Activated CD4-positive, alpha-beta T cell treated with anti-CD3 and anti-CD28 coated beads for 36 hours (primary cell): ENCODE measurements at regions of chr7 and their contacts with region 1.

Region 1: GRCh38 chr7:100611974-100612729 is at the start of gene MOSPD3:
- DNase-seq: peak; percentile 99
- ATAC-seq: peak; percentile 94
- H3K4me3 Mint-ChIP-seq: peak within 1 kb of the TSS; percentile 83
- H3K27ac Mint-ChIP-seq: peak within 1 kb of the TSS; percentile 100
- H3K4me1 Mint-ChIP-seq: peaks cover 17% of the 10 kb centered on the region
- H3K27me3 Mint-ChIP-seq: no peaks in the 10 kb centered on the region
- total RNA-seq, gene MOSPD3: 14.4 to 19.9 TPM

Region 2: DNA sequence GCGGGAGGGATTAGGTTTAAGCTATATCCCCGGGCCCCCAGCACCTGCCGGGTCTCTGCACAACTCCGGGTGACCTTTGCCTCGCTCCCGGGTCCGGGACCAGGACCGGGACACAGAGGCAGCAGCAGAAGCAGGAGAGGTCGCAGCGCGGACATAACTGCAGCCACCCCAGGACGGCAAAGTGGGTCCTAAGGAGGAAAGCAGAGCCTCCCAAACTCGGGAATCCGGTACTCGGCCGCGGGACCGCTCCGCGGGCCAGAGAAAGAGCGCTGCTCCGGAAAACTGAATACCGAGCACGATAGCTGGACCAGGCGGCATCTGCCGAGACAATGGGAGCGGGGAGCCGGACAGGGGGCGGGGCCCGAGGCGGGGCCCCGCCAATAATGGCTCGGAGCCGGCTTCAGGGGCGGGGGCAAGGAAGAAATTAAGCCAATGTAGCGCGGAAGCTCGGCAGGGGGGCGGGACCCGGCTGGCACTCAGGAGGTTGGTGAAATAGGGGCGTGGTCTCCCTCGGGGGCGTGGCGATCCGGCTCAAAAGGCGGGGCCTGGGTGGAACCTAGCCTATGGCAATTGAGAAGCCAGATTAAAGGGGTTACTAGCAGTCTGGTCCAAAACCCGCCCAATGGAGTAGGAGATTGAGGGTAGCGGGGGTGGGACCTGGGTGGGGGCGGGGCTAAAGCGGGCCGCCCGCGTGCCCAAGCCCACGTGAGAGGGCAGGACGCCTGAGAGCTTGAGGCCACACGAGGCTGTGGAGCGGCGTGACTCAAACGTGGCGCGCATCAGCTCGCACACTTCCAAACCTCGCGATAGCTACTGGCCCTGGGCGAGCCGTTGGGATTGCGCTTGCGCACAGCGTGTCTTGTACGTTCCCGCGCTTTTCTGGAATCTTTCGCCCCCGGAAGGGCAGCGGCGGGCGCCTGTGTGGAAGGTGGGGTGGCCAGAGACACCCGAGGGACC is 434.8 kb before region 1 on chr7 and contains the starts of genes GPC2 and STAG3:
- CTCF ChIA-PET with region 1: no interaction called
- POLR2A ChIA-PET with region 1: no interaction called
- intact Hi-C with region 1: loop called in 1 of 2 experiments (anchors 1 kb)
- DNase-seq: peak; percentile 99
- ATAC-seq: peak; percentile 89
- H3K4me3 Mint-ChIP-seq: peak within 1 kb of the TSS; percentile 76
- H3K27ac Mint-ChIP-seq: peak within 1 kb of the TSS; percentile 65
- H3K4me1 Mint-ChIP-seq: peaks cover 39% of the 10 kb centered on the region
- H3K27me3 Mint-ChIP-seq: peaks cover 3% of the 10 kb centered on the region
- total RNA-seq, gene GPC2: 5.3 to 6.1 TPM
- total RNA-seq, gene STAG3: 24.7 to 28.3 TPM

Region 3: GRCh38 chr7:100478966-100479665 is 133.0 kb before region 1 on chr7 and contains the start of gene TSC22D4:
- CTCF ChIA-PET with region 1: interaction called, 3 read pairs
- POLR2A ChIA-PET with region 1: no interaction called
- intact Hi-C with region 1: loop called in 1 of 2 experiments (anchors 1 kb)
- DNase-seq: peak; percentile 96
- ATAC-seq: peak; percentile 79
- H3K4me3 Mint-ChIP-seq: peak within 1 kb of the TSS; percentile 92
- H3K27ac Mint-ChIP-seq: peak within 1 kb of the TSS; percentile 94
- H3K4me1 Mint-ChIP-seq: peaks cover 41% of the 10 kb centered on the region
- H3K27me3 Mint-ChIP-seq: no peaks in the 10 kb centered on the region
- total RNA-seq, gene TSC22D4: 78.5 to 85.7 TPM

Region 4: DNA sequence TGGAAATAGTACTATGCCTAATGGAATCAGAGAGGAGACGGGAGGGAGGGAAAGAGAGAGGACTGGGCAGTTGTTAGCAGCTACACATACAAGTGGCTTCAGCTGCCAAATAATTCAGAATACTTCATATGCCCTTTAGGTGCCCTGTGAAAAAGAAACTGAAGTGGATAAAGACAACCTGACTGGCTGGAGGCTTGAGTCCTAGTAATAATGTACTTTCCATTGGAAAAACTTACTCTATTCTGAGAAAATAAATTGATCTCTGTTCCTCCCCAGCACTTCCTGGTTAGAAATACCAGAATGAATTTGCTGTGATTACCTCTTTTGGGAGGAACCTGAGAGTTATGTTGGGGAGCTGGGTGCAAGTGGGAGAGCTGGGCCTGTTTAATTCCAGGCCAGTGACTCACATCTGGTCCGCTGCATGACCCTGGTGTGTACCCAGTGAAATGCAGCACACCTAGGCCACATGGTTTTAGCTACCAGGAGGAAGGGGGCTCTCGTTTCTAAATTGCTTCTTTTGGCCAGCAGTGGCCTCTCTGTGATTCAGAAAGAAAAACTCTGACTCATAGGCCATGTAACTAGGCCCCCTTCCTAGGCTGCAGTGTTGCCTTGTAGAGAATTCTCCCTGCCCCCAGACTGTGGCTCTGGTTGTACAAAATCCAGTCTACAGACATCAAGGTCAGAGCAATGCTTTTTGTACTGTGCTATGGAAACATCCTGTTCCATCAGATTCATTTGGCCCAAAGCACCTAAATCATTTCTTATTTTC is 66.6 kb before region 1 on chr7:
- CTCF ChIA-PET with region 1: no interaction called
- POLR2A ChIA-PET with region 1: no interaction called
- intact Hi-C with region 1: loop called in 1 of 2 experiments (anchors 1 kb)
- DNase-seq: peak; percentile 82
- ATAC-seq: peak; percentile 78
- H3K4me3 Mint-ChIP-seq: peak overlapping the region; percentile 98
- H3K27ac Mint-ChIP-seq: peak overlapping the region; percentile 99
- H3K4me1 Mint-ChIP-seq: peaks cover 96% of the 10 kb centered on the region
- H3K27me3 Mint-ChIP-seq: no peaks in the 10 kb centered on the region

Region 5: DNA sequence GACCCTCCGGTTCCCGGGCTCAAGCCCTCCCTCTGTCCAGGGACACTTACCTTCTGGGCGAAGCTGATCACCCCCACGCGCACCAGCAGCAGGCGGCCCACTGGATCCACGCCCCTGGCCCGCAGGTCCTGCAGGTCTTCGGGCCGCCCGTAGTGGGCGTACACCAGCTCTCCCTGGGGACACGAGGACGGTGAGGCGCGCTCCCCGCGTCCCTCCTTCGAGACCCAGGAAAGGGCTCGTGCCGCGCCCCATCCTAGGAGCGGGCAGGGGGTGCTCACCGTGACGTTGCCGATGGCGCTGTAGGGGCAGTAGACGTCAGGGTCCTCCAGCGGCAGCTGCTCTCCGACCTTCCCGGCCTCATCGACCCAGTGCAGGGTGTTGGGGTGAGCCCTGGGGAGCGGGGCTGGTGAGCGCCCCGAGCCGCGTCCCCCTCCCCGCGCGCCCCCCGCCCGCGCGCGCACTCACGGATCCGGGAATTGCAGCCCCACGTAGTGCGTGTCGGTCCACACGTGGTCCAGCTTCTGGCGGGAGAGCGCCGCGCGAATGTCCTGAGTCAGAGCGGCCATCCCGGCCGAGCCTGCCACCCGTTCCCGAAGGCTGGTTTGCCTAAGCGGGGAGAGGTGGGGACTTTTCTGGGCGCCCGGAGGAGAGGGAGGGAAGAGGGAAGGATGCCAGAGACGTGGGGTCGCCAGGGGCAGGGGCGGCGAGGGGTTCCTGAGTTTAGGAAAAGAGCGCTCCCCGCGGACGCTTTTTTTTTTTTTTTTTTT is 21.0 kb after region 1 on chr7:
- CTCF ChIA-PET with region 1: interaction called, 14 read pairs
- POLR2A ChIA-PET with region 1: interaction called, 5 read pairs
- intact Hi-C with region 1: no loop called
- DNase-seq: peak; percentile 80
- ATAC-seq: peak; percentile 75
- H3K4me3 Mint-ChIP-seq: peak overlapping the region; percentile 80
- H3K27ac Mint-ChIP-seq: peak overlapping the region; percentile 92
- H3K4me1 Mint-ChIP-seq: peaks cover 18% of the 10 kb centered on the region
- H3K27me3 Mint-ChIP-seq: no peaks in the 10 kb centered on the region

Region 6: GRCh38 chr7:100852048-100852872 is 240.1 kb after region 1 on chr7 and contains the start of gene SLC12A9:
- CTCF ChIA-PET with region 1: no interaction called
- POLR2A ChIA-PET with region 1: no interaction called
- intact Hi-C with region 1: loop called in 1 of 2 experiments (anchors 1 kb)
- DNase-seq: peak; percentile 93
- ATAC-seq: peak; percentile 98
- H3K4me3 Mint-ChIP-seq: peak within 1 kb of the TSS; percentile 87
- H3K27ac Mint-ChIP-seq: peak within 1 kb of the TSS; percentile 91
- H3K4me1 Mint-ChIP-seq: peaks cover 11% of the 10 kb centered on the region
- H3K27me3 Mint-ChIP-seq: no peaks in the 10 kb centered on the region
- total RNA-seq, gene SLC12A9: 13.6 to 15.6 TPM